HepG2 (cell line): ENCODE measurements at regions of chr3 and their contacts with region 1.

Region 1: GRCh38 chr3:64484289-64484992 is 203.4 kb downstream of the ADAMTS9 start:
- DNase-seq: peak; percentile 41
- ATAC-seq: peak; percentile 99
- H3K4me3 ChIP-seq: no peak overlapping the region
- H3K27ac ChIP-seq: no peak overlapping the region
- H3K4me1 ChIP-seq: peaks cover 5% of the 10 kb centered on the region; the same call in 1 of the 2 replicates
- H3K27me3 ChIP-seq: peaks cover 2 to 22% of the 10 kb centered on the region in 2 experiments; a peak in 3 of 5 replicates
- CTCF ChIP-seq: peak; percentile 90
- EP300 ChIP-seq: no peak
- POLR2A ChIP-seq: no peak
- RAD21 ChIP-seq: peak; percentile 81

Region 2: DNA sequence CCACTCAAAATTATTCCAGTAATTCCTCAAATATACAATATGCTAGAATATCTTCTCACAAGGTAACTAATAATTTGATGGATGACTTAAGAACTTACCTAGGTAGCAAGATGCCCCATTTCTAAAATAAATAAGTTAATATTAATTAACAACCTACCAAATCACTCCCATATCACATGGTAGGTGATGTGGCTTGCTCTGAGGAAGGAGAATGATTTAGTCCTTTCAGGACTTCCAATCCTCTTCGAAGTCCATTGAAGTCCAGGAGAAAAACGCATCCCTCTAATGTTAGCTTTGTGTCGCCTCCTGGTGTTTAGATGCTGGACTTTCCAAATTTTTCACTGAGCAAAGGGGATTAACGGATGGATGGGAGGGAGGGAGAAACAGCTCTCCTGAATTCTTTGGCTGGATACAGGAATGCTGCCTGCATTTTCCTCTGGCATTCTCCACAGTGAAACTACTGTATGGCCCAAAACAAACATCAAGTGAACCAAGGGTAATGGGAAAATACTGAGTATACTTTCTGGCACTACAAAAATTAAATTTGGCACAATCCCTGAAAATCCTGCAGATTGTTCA is 317.8 kb before region 1 on chr3:
- CTCF ChIA-PET with region 1: no interaction called
- POLR2A ChIA-PET with region 1: no interaction called
- in situ Hi-C with region 1: no loop called
- intact Hi-C with region 1: loop called (anchors 5 kb)
- DNase-seq: peak; percentile 26
- ATAC-seq: peak; percentile 33; the same call in 1 of the 3 replicates
- H3K4me3 ChIP-seq: no peak overlapping the region
- H3K27ac ChIP-seq: no peak overlapping the region
- H3K4me1 ChIP-seq: peaks cover 2% of the 10 kb centered on the region
- H3K27me3 ChIP-seq: no peaks in the 10 kb centered on the region
- CTCF ChIP-seq: peak; percentile 51
- EP300 ChIP-seq: no peak
- POLR2A ChIP-seq: no peak
- RAD21 ChIP-seq: 0 out of 2 replicates have a peak, but pooled peaks have one; percentile 14

Region 3: GRCh38 chr3:64262574-64263114 is 221.8 kb before region 1 on chr3:
- CTCF ChIA-PET with region 1: no interaction called
- POLR2A ChIA-PET with region 1: no interaction called
- in situ Hi-C with region 1: no loop called
- intact Hi-C with region 1: loop called (anchors 2 kb)
- DNase-seq: no peak
- ATAC-seq: no peak
- H3K4me3 ChIP-seq: no peak overlapping the region
- H3K27ac ChIP-seq: no peak overlapping the region
- H3K4me1 ChIP-seq: peaks cover 17% of the 10 kb centered on the region
- H3K27me3 ChIP-seq: peaks cover 0 to 11% of the 10 kb centered on the region in 2 experiments; a peak in 2 of 5 replicates
- CTCF ChIP-seq: no peak
- EP300 ChIP-seq: no peak
- POLR2A ChIP-seq: no peak
- RAD21 ChIP-seq: no peak